Dorsolateral prefrontal cortex (tissue), 120 donors: ENCODE measurements at regions of chr19 and their contacts with region 1.

Region 1: GRCh38 chr19:14198384-14199376 is 7.3 kb downstream of the ADGRL1 start:
- DNase-seq: no peak
- H3K4me3 ChIP-seq: no peak overlapping the region
- H3K27ac ChIP-seq: peak overlapping the region in 9 of 59 donors; percentile 6 to 45 (median 16)
- H3K27me3 ChIP-seq: no peaks in the 10 kb centered on the region
- CTCF ChIP-seq: peak in 28 of 56 donors; percentile 8 to 45 (median 27)

Region 2: DNA sequence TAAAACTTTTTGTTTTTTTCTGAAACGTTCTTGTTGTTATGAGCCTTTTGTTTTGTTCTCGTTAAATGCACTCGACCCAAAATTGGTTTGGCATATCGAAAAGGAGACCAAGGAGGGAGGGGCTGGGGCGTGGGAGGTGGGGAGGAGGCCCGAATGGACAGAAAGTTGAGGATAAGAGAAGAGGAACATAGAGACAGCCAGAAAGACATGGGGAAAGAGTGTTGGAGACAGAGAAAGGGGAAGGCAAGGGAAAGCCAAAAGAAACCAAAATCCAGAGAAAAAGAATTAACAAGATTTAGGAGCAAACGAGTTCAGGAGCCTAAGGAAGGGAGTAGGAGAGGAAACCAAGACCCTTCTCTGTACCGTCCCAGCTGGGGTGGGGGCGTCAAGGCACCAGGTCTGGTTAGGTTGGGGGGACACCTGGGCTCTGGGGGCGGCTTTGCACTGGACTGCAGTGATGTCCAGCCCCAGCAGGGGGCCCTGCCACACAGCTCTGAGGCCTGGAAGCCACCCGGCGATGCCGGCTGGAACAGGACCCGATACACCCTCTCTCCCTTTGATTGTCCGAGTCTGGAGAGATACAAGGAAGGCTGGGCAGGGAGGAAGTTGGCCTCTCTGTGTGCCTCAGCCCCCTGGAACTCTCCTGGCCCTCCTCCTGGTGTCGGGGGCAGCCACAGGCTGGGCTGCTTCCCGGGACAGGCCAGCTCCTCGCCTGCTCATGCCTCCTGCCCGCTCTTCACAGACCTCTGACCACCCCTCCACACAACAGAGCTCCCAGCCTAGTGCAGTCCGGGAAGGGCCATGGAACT is 50.7 kb before region 1 on chr19:
- intact Hi-C with region 1: loop called (anchors 5 kb)
- DNase-seq: peak; percentile 58 to 81 (median 78)
- H3K4me3 ChIP-seq: peak overlapping the region in 14 of 59 donors; percentile 0 to 42 (median 14)
- H3K27ac ChIP-seq: peak overlapping the region in 56 of 59 donors; percentile 9 to 92 (median 79)
- H3K27me3 ChIP-seq: no peaks in the 10 kb centered on the region
- CTCF ChIP-seq: peak; percentile 49 to 93 (median 85)

Region 3: DNA sequence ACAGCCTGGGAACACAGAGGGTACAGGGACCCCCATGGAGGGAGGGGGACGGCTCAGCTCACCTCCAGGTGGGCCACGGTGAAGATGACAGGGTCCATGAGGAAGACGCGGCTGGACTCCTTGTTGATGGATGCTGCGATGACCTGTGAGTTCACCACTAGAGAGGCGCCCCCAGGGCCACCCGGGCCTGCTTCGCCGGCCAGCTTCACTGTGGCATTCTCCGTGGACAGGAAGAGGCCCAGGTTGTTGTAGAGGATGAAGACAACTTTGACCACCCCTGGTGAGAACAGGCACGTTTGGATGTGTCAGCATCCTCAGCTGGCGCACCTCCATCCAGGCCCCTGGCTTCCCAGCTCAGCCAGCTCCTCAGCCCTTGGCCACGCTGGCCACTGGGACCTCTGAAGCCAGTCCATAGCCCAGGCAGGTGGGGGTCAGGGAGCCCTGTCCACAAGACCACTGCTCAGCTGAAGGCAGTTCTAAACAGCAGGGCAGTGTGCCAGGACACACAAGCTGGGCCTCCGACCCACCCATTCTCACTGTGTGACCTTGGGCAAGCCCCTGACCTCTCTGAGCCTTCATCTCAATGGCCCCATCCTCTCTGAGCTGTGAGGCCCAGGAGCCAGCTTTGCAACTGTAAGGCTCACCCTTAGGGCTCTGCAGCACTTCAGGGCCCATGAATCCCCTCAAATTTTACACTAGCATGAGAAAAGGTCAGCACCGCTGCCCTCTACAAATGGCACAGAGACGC is 40.2 kb before region 1 on chr19:
- intact Hi-C with region 1: no loop called
- DNase-seq: no peak
- H3K4me3 ChIP-seq: no peak overlapping the region
- H3K27ac ChIP-seq: peak overlapping the region in 5 of 59 donors; percentile 8 to 29 (median 19)
- H3K27me3 ChIP-seq: no peaks in the 10 kb centered on the region
- CTCF ChIP-seq: no peak